ENCODE measurements at regions of chr2 and their contacts with region 1.

Region 1: GRCh38 chr2:160109936-160110673 is 47.7 kb upstream of the PLA2R1 start:
- DNase-seq: peak; percentile 61
- ATAC-seq: peak; percentile 77
- H3K4me3 Mint-ChIP-seq: no peak overlapping the region
- H3K27ac Mint-ChIP-seq: no peak overlapping the region
- H3K4me1 Mint-ChIP-seq: peaks cover 16% of the 10 kb centered on the region
- H3K27me3 Mint-ChIP-seq: no peaks in the 10 kb centered on the region; the same call in 1 of the 2 replicates
- CTCF ChIP-seq: peak; percentile 73

Region 2: DNA sequence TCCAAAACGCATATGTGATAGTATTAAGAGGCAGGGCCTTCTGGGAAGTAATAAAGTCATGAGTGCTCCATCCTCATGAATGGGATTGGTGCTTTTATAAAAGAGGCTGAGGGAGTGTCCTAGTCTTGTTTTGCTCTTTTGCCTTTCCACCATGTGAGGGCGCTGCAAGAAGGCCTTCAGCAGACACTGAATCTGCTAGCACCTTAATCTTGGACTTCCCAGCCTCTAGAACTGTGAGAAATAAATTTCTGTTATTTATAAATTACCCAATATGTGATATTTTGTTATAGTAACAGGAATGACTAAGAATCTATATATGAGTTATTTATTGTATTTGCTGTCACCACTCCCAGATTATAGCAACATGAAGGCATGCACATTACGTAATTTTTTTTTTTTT is 111.1 kb before region 1 on chr2:
- CTCF ChIA-PET with region 1: no interaction called
- POLR2A ChIA-PET with region 1: no interaction called
- DNase-seq: peak; percentile 29
- ATAC-seq: 0 out of 2 replicates have a peak, but pooled peaks have one; percentile 50
- H3K4me3 Mint-ChIP-seq: no peak overlapping the region
- H3K27ac Mint-ChIP-seq: no peak overlapping the region
- H3K4me1 Mint-ChIP-seq: peaks cover 10% of the 10 kb centered on the region
- H3K27me3 Mint-ChIP-seq: no peaks in the 10 kb centered on the region
- CTCF ChIP-seq: no peak

Region 3: DNA sequence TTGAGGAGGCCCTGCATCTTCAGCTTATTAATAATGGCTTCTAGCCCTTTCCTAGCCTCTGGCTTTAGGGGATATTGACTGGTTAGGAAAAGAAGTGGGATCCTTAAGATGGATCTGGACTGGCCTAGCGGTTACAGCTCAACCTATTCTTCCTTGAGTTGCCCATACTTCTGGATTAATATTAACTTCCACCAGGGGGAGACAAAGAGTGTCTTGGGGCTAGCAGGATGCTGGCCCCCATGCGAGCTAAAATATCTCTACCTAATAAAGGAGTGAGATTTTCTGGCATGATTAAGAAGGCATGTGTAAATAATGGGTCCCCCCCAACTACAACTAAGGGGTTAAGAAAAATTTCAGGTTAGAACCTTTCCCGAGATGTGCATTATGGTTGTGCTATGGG is 24.4 kb before region 1 on chr2:
- CTCF ChIA-PET with region 1: no interaction called
- POLR2A ChIA-PET with region 1: no interaction called
- DNase-seq: no peak
- ATAC-seq: no peak
- H3K4me3 Mint-ChIP-seq: no peak overlapping the region
- H3K27ac Mint-ChIP-seq: no peak overlapping the region
- H3K4me1 Mint-ChIP-seq: peaks cover 2% of the 10 kb centered on the region
- H3K27me3 Mint-ChIP-seq: peaks cover 7% of the 10 kb centered on the region; the same call in 1 of the 2 replicates
- CTCF ChIP-seq: no peak

Region 4: DNA sequence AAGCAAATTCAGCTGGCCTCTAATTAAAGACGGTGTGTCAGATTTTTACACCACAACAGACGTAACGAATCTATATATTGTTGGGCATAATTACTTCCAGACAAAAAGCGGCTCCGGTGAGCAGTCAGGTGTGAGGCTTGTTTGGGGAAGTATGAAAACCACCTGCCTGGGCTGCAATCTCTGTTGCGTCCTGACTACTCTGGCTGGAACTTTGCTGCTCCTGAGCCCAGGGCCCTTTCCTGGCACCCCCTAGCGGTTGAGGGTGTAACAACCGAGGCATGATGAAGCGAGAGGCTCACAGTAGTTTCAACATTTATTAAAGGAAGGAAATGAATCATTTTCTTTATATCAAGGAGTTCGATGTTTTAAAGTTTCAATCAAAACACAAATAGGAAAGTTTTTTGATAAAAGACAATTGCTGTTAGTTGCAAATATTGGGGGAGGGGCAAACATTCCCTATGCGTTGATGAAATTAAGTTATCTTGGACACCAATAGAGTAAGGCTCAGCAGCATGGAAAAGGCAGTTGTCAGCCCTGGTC is 100.6 kb after region 1 on chr2:
- CTCF ChIA-PET with region 1: interaction called, 37 read pairs
- POLR2A ChIA-PET with region 1: no interaction called
- DNase-seq: peak; percentile 86
- ATAC-seq: peak; percentile 96
- H3K4me3 Mint-ChIP-seq: no peak overlapping the region
- H3K27ac Mint-ChIP-seq: no peak overlapping the region
- H3K4me1 Mint-ChIP-seq: peaks cover 3% of the 10 kb centered on the region; the same call in 1 of the 2 replicates
- H3K27me3 Mint-ChIP-seq: no peaks in the 10 kb centered on the region
- CTCF ChIP-seq: peak; percentile 89

Region 5: GRCh38 chr2:160257741-160258485 is 147.8 kb after region 1 on chr2:
- CTCF ChIA-PET with region 1: no interaction called
- POLR2A ChIA-PET with region 1: no interaction called
- DNase-seq: no peak
- ATAC-seq: no peak
- H3K4me3 Mint-ChIP-seq: no peak overlapping the region
- H3K27ac Mint-ChIP-seq: no peak overlapping the region
- H3K4me1 Mint-ChIP-seq: 0 out of 2 replicates have a peak, but pooled peaks cover 5% of the 10 kb centered on the region
- H3K27me3 Mint-ChIP-seq: peaks cover 3% of the 10 kb centered on the region
- CTCF ChIP-seq: no peak

Region 6: DNA sequence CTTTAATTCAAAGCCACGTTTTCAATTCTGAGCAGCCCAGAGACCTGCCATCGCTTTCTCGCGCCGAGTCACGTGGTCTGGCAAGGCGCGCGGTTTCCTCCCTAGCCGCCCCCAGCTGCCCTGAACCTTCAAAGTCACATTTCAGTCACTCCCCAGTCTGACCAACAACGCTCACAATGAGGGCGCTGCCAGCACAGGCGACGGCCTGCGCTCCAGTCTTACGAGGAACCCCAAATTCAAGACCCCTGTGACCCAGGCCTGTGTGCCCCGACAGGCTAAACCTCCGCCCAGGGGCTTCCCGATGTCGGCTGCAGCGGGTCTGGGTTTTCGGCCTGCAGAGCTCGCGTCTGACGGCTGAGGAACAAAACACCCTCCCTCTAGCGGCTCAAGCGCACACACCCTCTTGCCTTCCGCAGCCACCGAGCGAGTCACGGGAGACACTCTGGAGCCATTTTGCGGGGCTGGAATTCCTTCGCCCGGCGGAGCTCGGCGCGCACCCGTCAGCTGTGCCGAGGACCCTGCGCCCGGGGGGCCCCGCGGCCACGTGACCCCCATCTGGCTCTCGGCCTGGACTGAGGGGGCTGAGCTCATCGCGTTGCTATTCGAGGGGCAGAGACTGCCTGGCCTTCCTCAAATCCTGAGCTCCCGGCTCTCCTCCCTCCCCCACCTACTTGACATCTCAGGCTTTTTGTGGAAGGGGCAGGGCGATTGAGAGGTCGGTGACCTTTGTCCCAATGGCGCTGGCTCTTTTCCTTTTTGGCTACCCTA is 159.9 kb after region 1 on chr2:
- CTCF ChIA-PET with region 1: interaction called, 17 read pairs
- POLR2A ChIA-PET with region 1: no interaction called
- DNase-seq: peak; percentile 79
- ATAC-seq: peak; percentile 79
- H3K4me3 Mint-ChIP-seq: peak overlapping the region; percentile 72
- H3K27ac Mint-ChIP-seq: peak overlapping the region; percentile 92
- H3K4me1 Mint-ChIP-seq: peaks cover 36% of the 10 kb centered on the region
- H3K27me3 Mint-ChIP-seq: peaks cover 24% of the 10 kb centered on the region
- CTCF ChIP-seq: no peak

Region 7: DNA sequence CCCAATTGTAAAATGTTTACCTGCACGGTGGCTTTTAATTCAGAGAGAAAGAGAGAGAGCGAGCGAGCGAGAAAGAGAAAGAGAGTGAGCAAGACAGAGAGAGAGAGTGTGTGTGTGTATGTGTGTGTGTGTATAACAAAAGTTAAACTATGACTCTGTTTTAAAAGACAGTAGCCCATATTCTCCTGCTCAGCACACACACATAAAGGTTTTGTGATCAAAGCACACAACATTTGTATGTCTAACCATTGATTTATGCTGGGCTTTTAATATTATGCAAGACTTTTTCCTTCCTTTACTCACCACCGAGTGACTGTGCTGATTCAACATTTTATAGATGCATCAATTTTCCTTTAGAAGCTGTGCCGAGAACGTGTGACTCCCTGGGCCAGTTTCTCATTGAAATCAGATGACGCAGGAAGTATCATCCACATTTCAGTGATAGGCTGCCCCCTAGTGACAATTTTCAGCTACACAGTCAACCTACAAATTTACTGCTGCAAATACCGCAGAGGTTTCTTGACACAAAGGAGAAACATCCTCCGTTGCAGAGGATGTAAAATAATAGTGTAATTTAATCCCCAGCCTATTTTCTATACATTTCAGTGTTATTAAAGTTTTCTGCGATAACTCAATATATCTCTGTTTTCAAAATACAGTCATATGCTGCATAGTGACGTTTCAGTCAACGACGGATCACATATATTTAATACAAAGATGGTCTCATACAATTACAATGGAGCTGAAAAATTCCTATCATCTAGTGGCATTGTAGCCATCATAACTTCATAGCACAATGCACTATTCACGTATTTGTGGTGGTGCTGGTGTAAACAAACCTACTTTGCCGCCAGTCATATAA is 884.3 kb after region 1 on chr2:
- CTCF ChIA-PET with region 1: interaction called, 25 read pairs
- POLR2A ChIA-PET with region 1: no interaction called
- DNase-seq: peak; percentile 66
- ATAC-seq: peak; percentile 81
- H3K4me3 Mint-ChIP-seq: no peak overlapping the region
- H3K27ac Mint-ChIP-seq: no peak overlapping the region; the same call in 1 of the 2 replicates
- H3K4me1 Mint-ChIP-seq: peaks cover 9% of the 10 kb centered on the region
- H3K27me3 Mint-ChIP-seq: no peaks in the 10 kb centered on the region
- CTCF ChIP-seq: peak; percentile 70

Region 8: GRCh38 chr2:161063157-161063954 is 953.3 kb after region 1 on chr2:
- CTCF ChIA-PET with region 1: interaction called, 13 read pairs
- POLR2A ChIA-PET with region 1: no interaction called
- DNase-seq: peak; percentile 79
- ATAC-seq: peak; percentile 97
- H3K4me3 Mint-ChIP-seq: no peak overlapping the region
- H3K27ac Mint-ChIP-seq: no peak overlapping the region
- H3K4me1 Mint-ChIP-seq: peaks cover 9% of the 10 kb centered on the region
- H3K27me3 Mint-ChIP-seq: no peaks in the 10 kb centered on the region
- CTCF ChIP-seq: peak; percentile 82